ENCODE measurements at regions of chr4 and their contacts with region 1.

Region 1: DNA sequence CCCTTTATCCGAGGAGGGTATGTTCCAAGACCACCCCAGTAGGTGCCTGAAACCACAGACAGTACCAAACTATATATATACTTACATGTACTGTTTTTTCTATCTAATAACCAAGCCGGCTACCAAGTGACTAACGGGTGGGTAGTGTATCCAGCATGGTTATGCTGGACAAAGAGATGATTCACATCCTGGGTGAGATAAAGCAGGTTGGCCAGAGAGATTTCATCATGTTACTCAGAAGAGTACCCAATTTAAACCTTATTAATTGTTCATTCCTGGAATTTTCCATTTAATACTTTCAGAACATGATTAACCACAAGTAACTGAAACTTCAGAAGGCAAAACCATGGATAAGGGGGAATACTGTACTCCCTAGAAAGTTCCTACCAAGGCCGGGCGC is 46.5 kb downstream of the RFC1 start:
- DNase-seq: peak; percentile 17 to 80
- H3K4me3 ChIP-seq: no peak overlapping the region
- H3K27ac ChIP-seq: peak overlapping the region; percentile 87
- H3K4me1 ChIP-seq: peaks cover 22% of the 10 kb centered on the region
- H3K27me3 ChIP-seq: no peaks in the 10 kb centered on the region
- CTCF ChIP-seq: no peak

Region 2: GRCh38 chr4:39227906-39228305 is 91.8 kb before region 1 on chr4:
- CTCF ChIA-PET with region 1: no interaction called
- POLR2A ChIA-PET with region 1: no interaction called
- intact Hi-C with region 1: no loop called
- DNase-seq: no peak
- H3K4me3 ChIP-seq: no peak overlapping the region
- H3K27ac ChIP-seq: no peak overlapping the region
- H3K4me1 ChIP-seq: no peaks in the 10 kb centered on the region
- H3K27me3 ChIP-seq: no peaks in the 10 kb centered on the region
- CTCF ChIP-seq: no peak

Region 3: DNA sequence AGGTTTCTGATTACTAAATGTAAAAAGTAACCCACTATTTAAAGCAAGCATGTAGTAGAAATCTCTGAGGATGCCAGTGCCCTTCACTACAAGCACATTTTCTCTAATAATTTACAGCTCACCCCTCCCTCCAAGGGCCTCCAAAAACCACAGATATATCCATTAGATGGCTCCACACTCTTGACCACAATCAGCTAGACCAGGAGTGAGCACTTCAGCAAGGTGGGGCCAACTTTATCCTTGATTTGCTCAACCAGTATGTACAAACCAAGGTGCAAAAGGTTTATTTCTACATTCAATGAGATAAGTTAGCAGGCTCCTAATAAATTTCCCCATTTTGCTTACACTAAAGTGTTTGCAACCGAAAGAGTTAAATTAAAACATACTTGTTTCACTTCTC is 10.7 kb after region 1 on chr4:
- CTCF ChIA-PET with region 1: no interaction called
- POLR2A ChIA-PET with region 1: no interaction called
- intact Hi-C with region 1: loop called (anchors 1 kb)
- DNase-seq: no peak
- H3K4me3 ChIP-seq: no peak overlapping the region
- H3K27ac ChIP-seq: no peak overlapping the region
- H3K4me1 ChIP-seq: no peaks in the 10 kb centered on the region
- H3K27me3 ChIP-seq: no peaks in the 10 kb centered on the region
- CTCF ChIP-seq: no peak